CD4-positive, alpha-beta memory T cell (primary cell): ENCODE measurements at regions of chr3 and their contacts with region 1.

Region 1: DNA sequence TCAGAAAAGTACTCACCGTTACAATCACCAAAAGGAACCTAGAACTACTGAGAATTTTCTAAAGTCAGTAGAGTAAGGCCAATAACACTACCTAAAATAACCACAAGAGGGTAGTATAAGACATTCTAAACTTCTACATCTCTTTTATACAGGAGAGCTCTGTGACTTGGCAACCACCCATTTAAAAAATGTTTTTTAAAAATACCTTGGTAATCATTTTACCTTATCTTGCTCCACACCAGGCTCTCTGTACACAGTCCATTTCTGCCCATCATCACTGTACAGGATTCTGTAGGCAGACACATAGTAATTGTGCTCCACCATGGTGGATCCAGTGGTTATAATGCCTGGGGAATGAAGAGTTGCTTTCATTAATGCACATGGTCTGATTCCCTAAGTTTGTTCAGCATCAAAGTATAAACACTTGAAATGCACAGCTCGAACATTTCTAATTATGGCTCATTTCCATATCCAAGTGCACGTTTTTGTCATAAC is 54.5 kb downstream of the ST3GAL6 start:
- DNase-seq: peak in 4 of 5 donors; percentile 26 to 41 (median 39)
- H3K4me3 ChIP-seq: no peak overlapping the region
- H3K4me3 Mint-ChIP-seq: no peak overlapping the region
- H3K27ac ChIP-seq: no peak overlapping the region
- H3K27ac Mint-ChIP-seq: no peak overlapping the region
- H3K4me1 ChIP-seq: no peaks in the 10 kb centered on the region
- H3K4me1 Mint-ChIP-seq: no peaks in the 10 kb centered on the region
- H3K27me3 ChIP-seq: no peaks in the 10 kb centered on the region
- H3K27me3 Mint-ChIP-seq: peaks cover 0 to 2% of the 10 kb centered on the region in 2 donors

Region 2: DNA sequence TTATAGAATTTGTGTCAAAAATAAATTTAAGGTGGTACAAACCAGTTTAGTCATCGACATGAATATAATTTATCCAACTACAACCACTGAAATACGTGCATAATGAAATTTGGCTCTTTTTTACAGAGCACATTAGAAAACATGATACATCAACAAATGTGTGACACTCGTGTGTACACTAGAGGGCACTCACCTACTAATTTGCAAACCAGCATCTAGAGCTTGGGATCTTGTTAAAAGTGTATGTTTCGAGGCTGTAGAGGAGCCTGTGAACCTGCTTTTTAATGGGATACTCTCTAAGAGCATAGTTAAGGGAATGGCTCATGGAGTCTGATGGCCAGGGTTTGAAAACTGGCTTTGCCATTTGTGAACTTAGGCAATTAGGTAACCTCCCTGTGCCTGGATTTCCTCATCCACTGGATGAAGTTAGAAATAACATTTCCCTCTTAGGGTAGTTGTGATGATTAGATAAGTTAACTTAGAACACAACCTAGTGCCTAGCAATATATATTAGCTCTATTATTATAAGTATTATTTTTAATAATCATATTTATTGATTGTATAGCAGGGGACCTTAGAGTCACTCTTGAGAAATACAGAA is 215.4 kb before region 1 on chr3:
- CTCF ChIA-PET with region 1: interaction called, 6 read pairs
- POLR2A ChIA-PET with region 1: no interaction called
- intact Hi-C with region 1: loop called (anchors 5 kb)
- DNase-seq: peak in 3 of 5 donors; percentile 10 to 26 (median 24)
- H3K4me3 ChIP-seq: no peak overlapping the region
- H3K4me3 Mint-ChIP-seq: no peak overlapping the region
- H3K27ac ChIP-seq: no peak overlapping the region
- H3K27ac Mint-ChIP-seq: no peak overlapping the region
- H3K4me1 ChIP-seq: no peaks in the 10 kb centered on the region
- H3K4me1 Mint-ChIP-seq: no peaks in the 10 kb centered on the region
- H3K27me3 ChIP-seq: no peaks in the 10 kb centered on the region
- H3K27me3 Mint-ChIP-seq: peaks cover 7 to 12% of the 10 kb centered on the region in 2 donors

Region 3: GRCh38 chr3:98645039-98645438 is 172.6 kb before region 1 on chr3:
- CTCF ChIA-PET with region 1: no interaction called
- POLR2A ChIA-PET with region 1: no interaction called
- intact Hi-C with region 1: no loop called
- DNase-seq: no peak
- H3K4me3 ChIP-seq: no peak overlapping the region
- H3K4me3 Mint-ChIP-seq: no peak overlapping the region
- H3K27ac ChIP-seq: no peak overlapping the region
- H3K27ac Mint-ChIP-seq: no peak overlapping the region
- H3K4me1 ChIP-seq: no peaks in the 10 kb centered on the region
- H3K4me1 Mint-ChIP-seq: no peaks in the 10 kb centered on the region
- H3K27me3 ChIP-seq: no peaks in the 10 kb centered on the region
- H3K27me3 Mint-ChIP-seq: peaks cover 3 to 13% of the 10 kb centered on the region in 2 donors

Region 4: DNA sequence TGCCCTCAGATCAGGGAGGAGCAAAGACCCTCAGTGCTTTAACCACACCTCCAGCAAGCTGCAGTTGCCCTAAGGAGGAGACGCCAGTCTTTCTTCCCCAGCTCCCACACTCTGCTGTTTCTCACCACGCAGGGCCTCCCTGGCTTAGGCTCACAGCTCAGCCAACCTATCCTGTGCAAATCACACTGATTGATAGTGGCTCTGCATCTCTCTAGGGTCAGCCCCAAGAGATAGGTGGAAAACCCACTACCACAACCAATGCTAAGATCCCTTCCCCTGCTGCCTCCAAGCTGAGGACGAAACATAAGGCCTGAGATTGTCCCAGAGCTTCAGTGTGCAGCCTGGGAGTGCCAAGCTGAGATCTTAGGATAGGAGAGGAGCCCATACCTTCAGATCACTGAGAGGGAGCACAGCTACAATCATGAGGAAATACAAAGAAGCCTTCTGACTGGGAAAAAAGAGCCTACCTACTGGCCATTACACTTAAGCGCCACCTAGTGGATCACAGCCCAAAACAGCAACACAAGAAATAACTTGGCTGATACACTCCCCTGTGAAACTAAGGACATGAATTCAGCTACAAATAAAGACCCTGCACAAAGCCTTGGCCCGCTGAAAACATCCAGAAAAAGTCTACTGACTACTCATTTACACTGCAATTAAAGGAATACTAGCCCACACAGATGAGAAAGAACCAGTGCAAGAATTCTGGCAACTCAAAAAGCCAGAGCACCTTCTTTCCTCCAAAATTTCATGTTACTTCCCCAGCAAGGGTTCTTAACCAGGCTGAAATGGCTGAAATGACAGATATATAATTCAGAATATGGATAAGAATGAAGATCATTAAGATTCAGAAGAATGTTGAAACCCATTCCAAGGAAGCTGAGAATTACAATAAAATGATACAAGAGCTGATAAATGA is 355.4 kb after region 1 on chr3:
- CTCF ChIA-PET with region 1: interaction called, 12 read pairs
- POLR2A ChIA-PET with region 1: no interaction called
- intact Hi-C with region 1: no loop called
- DNase-seq: peak in 2 of 5 donors; percentile 5 to 12
- H3K4me3 ChIP-seq: no peak overlapping the region
- H3K4me3 Mint-ChIP-seq: no peak overlapping the region
- H3K27ac ChIP-seq: no peak overlapping the region
- H3K27ac Mint-ChIP-seq: no peak overlapping the region
- H3K4me1 ChIP-seq: no peaks in the 10 kb centered on the region
- H3K4me1 Mint-ChIP-seq: no peaks in the 10 kb centered on the region
- H3K27me3 ChIP-seq: no peaks in the 10 kb centered on the region
- H3K27me3 Mint-ChIP-seq: no peaks in the 10 kb centered on the region

Region 5: GRCh38 chr3:99789011-99789721 is 971.6 kb after region 1 on chr3:
- CTCF ChIA-PET with region 1: interaction called, 4 read pairs
- POLR2A ChIA-PET with region 1: no interaction called
- intact Hi-C with region 1: loop called (anchors 1 kb)
- DNase-seq: peak in 2 of 5 donors; percentile 7 to 9
- H3K4me3 ChIP-seq: no peak overlapping the region
- H3K4me3 Mint-ChIP-seq: no peak overlapping the region
- H3K27ac ChIP-seq: no peak overlapping the region
- H3K27ac Mint-ChIP-seq: no peak overlapping the region
- H3K4me1 ChIP-seq: no peaks in the 10 kb centered on the region
- H3K4me1 Mint-ChIP-seq: peaks cover 0 to 2% (median under 1%) of the 10 kb centered on the region in 4 donors
- H3K27me3 ChIP-seq: no peaks in the 10 kb centered on the region
- H3K27me3 Mint-ChIP-seq: peaks cover 0 to 4% of the 10 kb centered on the region in 2 donors